PC-3 (cell line): ENCODE measurements at regions of chr2 and their contacts with region 1.

Region 1: GRCh38 chr2:223846525-223846924 is 9.1 kb upstream of the AP1S3 start:
- DNase-seq: peak; percentile 30
- ATAC-seq: peak; percentile 29
- H3K4me3 ChIP-seq: no peak overlapping the region
- H3K27ac ChIP-seq: no peak overlapping the region
- H3K4me1 ChIP-seq: peaks cover 4% of the 10 kb centered on the region; the same call in 1 of the 2 replicates
- H3K27me3 ChIP-seq: no peaks in the 10 kb centered on the region
- CTCF ChIP-seq: no peak

Region 2: DNA sequence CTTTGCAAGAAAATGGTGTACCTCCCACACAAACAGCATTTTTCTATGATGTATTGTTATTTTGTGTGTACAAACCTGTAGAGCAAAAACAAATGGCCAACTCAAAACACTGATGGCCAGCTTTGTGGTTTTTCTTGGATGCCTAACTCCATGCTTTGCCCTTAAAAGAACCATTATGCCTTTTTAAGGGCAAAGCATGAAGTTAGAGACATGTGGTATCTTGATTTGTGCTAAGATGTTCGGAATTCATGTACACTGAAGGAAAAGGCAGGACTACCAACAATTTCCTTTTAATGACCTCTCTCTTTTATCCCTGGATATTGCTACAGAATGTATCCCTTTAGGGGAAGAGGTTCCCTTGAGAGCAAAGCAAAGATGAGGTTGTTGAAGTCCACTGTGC is 517.9 kb before region 1 on chr2:
- CTCF ChIA-PET with region 1: no interaction called
- POLR2A ChIA-PET with region 1: no interaction called
- intact Hi-C with region 1: no loop called
- DNase-seq: no peak
- ATAC-seq: no peak
- H3K4me3 ChIP-seq: no peak overlapping the region
- H3K27ac ChIP-seq: no peak overlapping the region
- H3K4me1 ChIP-seq: no peaks in the 10 kb centered on the region
- H3K27me3 ChIP-seq: peaks cover 12% of the 10 kb centered on the region; the same call in 1 of the 2 replicates
- CTCF ChIP-seq: no peak

Region 3: DNA sequence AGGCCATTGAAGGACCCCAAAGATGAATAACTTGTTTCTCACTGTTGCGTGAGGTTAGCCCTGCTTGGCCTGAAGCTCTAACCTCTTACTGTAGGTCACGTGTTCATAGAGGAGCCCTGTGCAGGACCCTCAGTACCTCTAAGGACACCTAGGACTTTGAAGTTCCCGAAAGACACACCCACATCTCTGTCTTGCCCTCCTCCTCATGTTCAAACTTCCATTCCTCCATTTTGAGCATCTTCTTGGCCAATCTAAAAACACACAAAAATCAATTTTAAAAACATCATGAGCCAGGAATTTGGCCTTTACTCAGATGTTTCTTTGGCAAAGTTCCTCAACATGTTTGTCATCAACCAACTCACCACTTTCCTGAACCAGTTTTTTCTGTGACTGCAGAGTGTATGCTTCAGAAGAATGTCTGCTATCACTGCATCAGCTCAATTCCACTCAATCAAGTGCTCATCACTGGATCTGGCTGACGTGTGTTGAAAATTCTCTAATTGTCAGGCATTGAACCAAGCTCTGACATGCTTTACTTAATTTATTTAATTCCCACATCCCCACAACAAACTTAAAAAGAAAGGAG is 110.8 kb before region 1 on chr2:
- CTCF ChIA-PET with region 1: no interaction called
- POLR2A ChIA-PET with region 1: no interaction called
- intact Hi-C with region 1: no loop called
- DNase-seq: peak; percentile 83
- ATAC-seq: peak; percentile 70
- H3K4me3 ChIP-seq: no peak overlapping the region
- H3K27ac ChIP-seq: peak overlapping the region; percentile 43
- H3K4me1 ChIP-seq: peaks cover 15% of the 10 kb centered on the region
- H3K27me3 ChIP-seq: no peaks in the 10 kb centered on the region
- CTCF ChIP-seq: no peak

Region 4: DNA sequence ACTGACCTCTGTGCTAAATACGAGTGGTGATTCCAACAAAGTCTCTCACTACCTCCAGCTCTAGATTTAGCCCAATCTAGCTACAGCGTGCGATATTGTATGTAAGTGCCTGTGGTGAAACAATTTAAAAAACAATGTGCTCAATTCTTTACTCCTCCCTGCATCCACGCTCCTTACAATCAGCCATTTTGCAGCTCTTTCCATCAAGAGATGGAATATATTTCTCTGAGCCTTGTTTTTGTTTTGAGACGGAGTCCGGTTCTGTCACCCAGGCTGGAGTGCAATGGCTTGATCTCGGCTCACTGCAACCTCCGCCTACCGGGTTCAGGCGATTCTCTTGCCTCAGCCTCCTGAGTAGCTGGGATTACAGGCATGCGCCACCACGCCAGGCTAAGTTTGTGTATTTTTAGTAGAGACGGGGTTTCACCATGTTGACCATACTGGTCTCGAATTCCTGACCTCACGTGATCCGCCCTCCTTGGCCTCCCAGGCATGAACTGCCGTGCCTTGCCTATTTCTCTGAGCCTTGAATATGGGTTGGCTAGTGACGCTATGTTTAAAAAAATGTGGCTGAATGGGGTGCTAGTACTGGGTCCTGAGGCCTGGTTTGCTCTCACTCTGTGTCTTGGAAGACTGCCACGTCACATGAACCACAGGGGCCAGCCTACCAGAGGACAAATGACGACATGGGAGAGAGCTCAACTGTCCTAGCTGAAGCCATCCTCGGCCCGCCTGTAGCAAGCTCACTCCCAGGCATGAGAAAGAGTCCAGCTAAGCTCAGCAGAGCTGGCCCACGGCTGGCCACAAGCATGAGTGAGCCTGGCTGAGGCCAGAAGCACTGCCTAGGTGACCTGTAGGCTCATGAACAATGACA is 83.8 kb after region 1 on chr2:
- CTCF ChIA-PET with region 1: no interaction called
- POLR2A ChIA-PET with region 1: interaction called, 34 read pairs
- intact Hi-C with region 1: no loop called
- DNase-seq: no peak
- ATAC-seq: no peak
- H3K4me3 ChIP-seq: no peak overlapping the region
- H3K27ac ChIP-seq: no peak overlapping the region
- H3K4me1 ChIP-seq: peaks cover 8% of the 10 kb centered on the region; the same call in 1 of the 2 replicates
- H3K27me3 ChIP-seq: no peaks in the 10 kb centered on the region
- CTCF ChIP-seq: no peak

Region 5: GRCh38 chr2:224046752-224047151 is 200.2 kb after region 1 on chr2:
- CTCF ChIA-PET with region 1: no interaction called
- POLR2A ChIA-PET with region 1: no interaction called
- intact Hi-C with region 1: no loop called
- DNase-seq: no peak
- ATAC-seq: no peak
- H3K4me3 ChIP-seq: no peak overlapping the region
- H3K27ac ChIP-seq: no peak overlapping the region
- H3K4me1 ChIP-seq: no peaks in the 10 kb centered on the region
- H3K27me3 ChIP-seq: no peaks in the 10 kb centered on the region
- CTCF ChIP-seq: no peak